Head of caudate nucleus (tissue), 42 donors: ENCODE measurements at regions of chr9 and their contacts with region 1.

Region 1: GRCh38 chr9:129102901-129103594 is 7.5 kb downstream of the CRAT start:
- DNase-seq: peak in 39 of 42 donors; percentile 22 to 80 (median 56)

Region 2: GRCh38 chr9:128781187-128782070 is 321.6 kb before region 1 on chr9:
- intact Hi-C with region 1: no loop called
- DNase-seq: no peak

Region 3: GRCh38 chr9:129082028-129082427 is 21.0 kb before region 1 on chr9:
- intact Hi-C with region 1: loop called (anchors 2 kb)
- DNase-seq: no peak